Caco-2 (cell line): ENCODE measurements at regions of chr12 and their contacts with region 1.

Region 1: GRCh38 chr12:49967042-49967776 is 5.5 kb downstream of the AQP5 start:
- DNase-seq: peak; percentile 88 to 92
- H3K4me3 ChIP-seq: peak overlapping the region; percentile 18
- H3K4me3 Mint-ChIP-seq: peak overlapping the region; percentile 34
- H3K27ac Mint-ChIP-seq: peak overlapping the region; percentile 33
- H3K4me1 ChIP-seq: peaks cover 20% of the 10 kb centered on the region
- H3K4me1 Mint-ChIP-seq: no peaks in the 10 kb centered on the region
- H3K27me3 ChIP-seq: no peaks in the 10 kb centered on the region
- H3K27me3 Mint-ChIP-seq: no peaks in the 10 kb centered on the region
- CTCF ChIP-seq: peak; percentile 94 to 98

Region 2: GRCh38 chr12:49866859-49867579 is 100.2 kb before region 1 on chr12:
- CTCF ChIA-PET with region 1: interaction called, 46 read pairs
- POLR2A ChIA-PET with region 1: interaction called, 10 read pairs
- intact Hi-C with region 1: loop called (anchors 1 kb)
- DNase-seq: peak; percentile 89 to 93
- H3K4me3 ChIP-seq: 0 out of 2 replicates have a peak overlapping the region, but pooled peaks have one; percentile 1
- H3K4me3 Mint-ChIP-seq: peak overlapping the region; percentile 60
- H3K27ac Mint-ChIP-seq: peak overlapping the region; percentile 90
- H3K4me1 ChIP-seq: peaks cover 53% of the 10 kb centered on the region
- H3K4me1 Mint-ChIP-seq: peaks cover 46% of the 10 kb centered on the region
- H3K27me3 ChIP-seq: no peaks in the 10 kb centered on the region
- H3K27me3 Mint-ChIP-seq: no peaks in the 10 kb centered on the region
- CTCF ChIP-seq: peak; percentile 98 to 99

Region 3: GRCh38 chr12:49982246-49983087 is 15.3 kb after region 1 on chr12:
- CTCF ChIA-PET with region 1: interaction called, 52 read pairs
- POLR2A ChIA-PET with region 1: no interaction called
- intact Hi-C with region 1: no loop called
- DNase-seq: no peak
- H3K4me3 ChIP-seq: no peak overlapping the region
- H3K4me3 Mint-ChIP-seq: no peak overlapping the region
- H3K27ac Mint-ChIP-seq: no peak overlapping the region
- H3K4me1 ChIP-seq: peaks cover 19% of the 10 kb centered on the region
- H3K4me1 Mint-ChIP-seq: peaks cover 12% of the 10 kb centered on the region
- H3K27me3 ChIP-seq: no peaks in the 10 kb centered on the region
- H3K27me3 Mint-ChIP-seq: no peaks in the 10 kb centered on the region
- CTCF ChIP-seq: no peak

Region 4: GRCh38 chr12:50043854-50044253 is 76.6 kb after region 1 on chr12:
- CTCF ChIA-PET with region 1: interaction called, 7 read pairs
- POLR2A ChIA-PET with region 1: no interaction called
- intact Hi-C with region 1: loop called (anchors 1 kb)
- DNase-seq: peak in 1 of 2 experiments; percentile 17
- H3K4me3 ChIP-seq: no peak overlapping the region
- H3K4me3 Mint-ChIP-seq: no peak overlapping the region
- H3K27ac Mint-ChIP-seq: no peak overlapping the region
- H3K4me1 ChIP-seq: peaks cover 9% of the 10 kb centered on the region
- H3K4me1 Mint-ChIP-seq: peaks cover 11% of the 10 kb centered on the region
- H3K27me3 ChIP-seq: no peaks in the 10 kb centered on the region
- H3K27me3 Mint-ChIP-seq: no peaks in the 10 kb centered on the region
- CTCF ChIP-seq: no peak

Region 5: DNA sequence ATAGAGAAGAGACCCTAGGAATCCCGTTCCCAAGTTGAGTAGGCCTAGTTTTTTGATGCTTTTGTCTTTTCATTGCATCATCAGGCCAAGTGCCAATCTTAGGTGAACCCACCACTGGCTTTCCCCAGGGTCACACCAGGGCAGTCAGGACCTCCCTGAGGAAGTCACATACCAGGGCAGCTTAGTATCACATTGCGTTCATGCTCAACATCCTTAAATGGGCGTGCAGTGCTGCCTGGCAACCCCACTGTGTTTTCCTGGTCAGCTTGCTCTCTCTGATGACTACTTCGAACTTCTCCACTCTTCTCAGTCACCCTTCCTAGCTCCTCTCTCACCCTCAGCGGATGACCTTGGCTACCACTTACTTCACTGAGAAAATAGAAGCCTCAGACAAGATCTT is 99.2 kb after region 1 on chr12:
- CTCF ChIA-PET with region 1: interaction called, 78 read pairs
- POLR2A ChIA-PET with region 1: no interaction called
- intact Hi-C with region 1: loop called (anchors 1 kb)
- DNase-seq: peak; percentile 63 to 69
- H3K4me3 ChIP-seq: no peak overlapping the region
- H3K4me3 Mint-ChIP-seq: no peak overlapping the region
- H3K27ac Mint-ChIP-seq: no peak overlapping the region
- H3K4me1 ChIP-seq: 0 out of 2 replicates have a peak, but pooled peaks cover 8% of the 10 kb centered on the region
- H3K4me1 Mint-ChIP-seq: peaks cover 12% of the 10 kb centered on the region
- H3K27me3 ChIP-seq: no peaks in the 10 kb centered on the region
- H3K27me3 Mint-ChIP-seq: no peaks in the 10 kb centered on the region
- CTCF ChIP-seq: no peak

Region 6: DNA sequence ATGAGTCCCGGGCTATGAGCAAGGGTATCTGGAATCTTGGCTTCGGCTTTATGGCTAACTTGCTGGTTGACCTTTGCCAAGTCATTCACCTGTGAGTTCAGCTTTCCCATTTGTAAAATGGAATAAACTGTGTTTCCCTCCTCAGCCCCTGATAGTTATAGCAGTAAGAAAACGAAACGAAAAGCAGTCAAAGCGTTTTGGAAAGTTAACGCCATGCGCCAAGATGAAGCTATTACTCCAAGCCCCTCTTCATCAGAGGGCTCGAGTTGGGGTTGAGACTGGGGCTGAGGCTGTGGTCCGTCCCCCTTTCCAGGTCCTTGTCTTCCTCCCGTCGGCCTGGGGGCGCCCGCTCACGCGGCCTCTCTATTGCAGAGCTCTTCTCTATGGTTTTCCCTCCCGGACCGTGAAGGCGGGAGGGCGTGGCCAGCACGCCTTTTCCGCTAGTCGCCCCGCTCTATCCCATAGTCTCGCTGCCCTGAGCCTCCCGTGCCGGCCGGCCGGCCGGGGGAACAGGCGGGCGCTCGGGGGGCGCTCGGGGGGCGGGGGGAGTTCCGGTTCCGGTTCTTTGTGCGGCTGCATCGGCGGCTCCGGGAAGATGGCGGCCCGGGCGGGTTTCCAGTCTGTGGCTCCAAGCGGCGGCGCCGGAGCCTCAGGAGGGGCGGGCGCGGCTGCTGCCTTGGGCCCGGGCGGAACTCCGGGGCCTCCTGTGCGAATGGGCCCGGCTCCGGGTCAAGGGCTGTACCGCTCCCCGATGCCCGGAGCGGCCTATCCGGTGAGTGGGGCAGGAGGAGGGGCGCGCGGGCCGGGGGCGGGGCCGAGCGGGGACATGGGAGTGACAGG is 117.8 kb after region 1 on chr12 and contains the start of gene SMARCD1:
- CTCF ChIA-PET with region 1: interaction called, 9 read pairs
- POLR2A ChIA-PET with region 1: interaction called, 12 read pairs
- intact Hi-C with region 1: no loop called
- DNase-seq: peak; percentile 97
- H3K4me3 ChIP-seq: peak within 1 kb of the TSS; percentile 72
- H3K4me3 Mint-ChIP-seq: peak within 1 kb of the TSS; percentile 83
- H3K27ac Mint-ChIP-seq: peak within 1 kb of the TSS; percentile 79
- H3K4me1 ChIP-seq: peaks cover 44% of the 10 kb centered on the region
- H3K4me1 Mint-ChIP-seq: peaks cover 37% of the 10 kb centered on the region
- H3K27me3 ChIP-seq: no peaks in the 10 kb centered on the region
- H3K27me3 Mint-ChIP-seq: no peaks in the 10 kb centered on the region
- CTCF ChIP-seq: peak; percentile 12 to 87
- total RNA-seq, gene SMARCD1: 142 and 158 TPM in 2 replicates

Region 7: GRCh38 chr12:50174971-50175715 is 207.9 kb after region 1 on chr12:
- CTCF ChIA-PET with region 1: no interaction called
- POLR2A ChIA-PET with region 1: no interaction called
- intact Hi-C with region 1: loop called (anchors 2 kb)
- DNase-seq: peak in 1 of 2 experiments; percentile 80
- H3K4me3 ChIP-seq: no peak overlapping the region
- H3K4me3 Mint-ChIP-seq: no peak overlapping the region
- H3K27ac Mint-ChIP-seq: no peak overlapping the region
- H3K4me1 ChIP-seq: peaks cover 6% of the 10 kb centered on the region; the same call in 1 of the 2 replicates
- H3K4me1 Mint-ChIP-seq: no peaks in the 10 kb centered on the region
- H3K27me3 ChIP-seq: no peaks in the 10 kb centered on the region
- H3K27me3 Mint-ChIP-seq: no peaks in the 10 kb centered on the region
- CTCF ChIP-seq: peak; percentile 45 to 72